Motor neuron (in vitro differentiated cells): ENCODE measurements at regions of chr16 and their contacts with region 1.

Region 1: GRCh38 chr16:62190426-62190825 is 154.2 kb upstream of the CDH8 start:
- ATAC-seq: peak in 2 of 8 experiments; percentile 24 to 65
- H3K4me3 ChIP-seq: no peak overlapping the region
- H3K27ac ChIP-seq: no peak overlapping the region
- H3K4me1 ChIP-seq: no peaks in the 10 kb centered on the region

Region 2: DNA sequence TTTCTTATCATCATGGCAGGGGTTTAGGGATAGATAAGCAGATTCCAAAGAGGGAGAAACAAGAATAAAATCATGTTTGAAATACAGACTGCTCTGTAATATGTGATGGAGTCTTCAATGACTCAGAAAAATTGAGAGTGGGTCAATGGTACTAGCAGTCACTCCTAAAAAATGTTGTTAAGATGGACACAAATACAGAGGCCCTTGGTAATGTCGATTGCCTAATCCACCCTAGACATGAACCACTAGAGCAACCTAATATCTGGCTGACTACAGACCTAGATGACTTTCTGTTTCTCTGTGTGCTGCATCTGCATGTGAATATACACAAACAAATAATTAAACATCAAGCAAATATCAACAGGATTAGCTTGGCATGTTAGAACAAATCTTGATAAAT is 289.9 kb before region 1 on chr16:
- in situ Hi-C with region 1: no loop called
- ATAC-seq: no peak
- H3K4me3 ChIP-seq: no peak overlapping the region
- H3K27ac ChIP-seq: no peak overlapping the region
- H3K4me1 ChIP-seq: no peaks in the 10 kb centered on the region

Region 3: DNA sequence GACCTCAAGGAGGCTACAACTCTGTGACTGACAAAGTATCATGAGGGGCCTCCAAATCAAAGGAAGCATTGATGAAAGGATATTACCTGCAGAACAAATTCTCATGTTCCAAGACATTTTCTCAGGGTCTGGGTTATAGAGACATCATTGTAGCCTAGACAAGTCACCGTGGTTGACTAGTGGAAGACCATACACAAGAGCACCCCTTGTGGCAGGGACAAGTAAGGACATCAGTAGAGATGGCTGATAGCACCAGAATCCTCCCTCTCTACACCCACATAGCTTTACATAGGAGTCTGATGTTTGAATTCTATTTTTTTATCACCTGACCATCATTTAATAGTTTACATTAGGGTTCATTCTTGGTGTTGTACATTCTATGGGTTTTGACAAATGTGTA is 121.7 kb before region 1 on chr16:
- in situ Hi-C with region 1: no loop called
- ATAC-seq: no peak
- H3K4me3 ChIP-seq: no peak overlapping the region
- H3K27ac ChIP-seq: no peak overlapping the region
- H3K4me1 ChIP-seq: no peaks in the 10 kb centered on the region

Region 4: DNA sequence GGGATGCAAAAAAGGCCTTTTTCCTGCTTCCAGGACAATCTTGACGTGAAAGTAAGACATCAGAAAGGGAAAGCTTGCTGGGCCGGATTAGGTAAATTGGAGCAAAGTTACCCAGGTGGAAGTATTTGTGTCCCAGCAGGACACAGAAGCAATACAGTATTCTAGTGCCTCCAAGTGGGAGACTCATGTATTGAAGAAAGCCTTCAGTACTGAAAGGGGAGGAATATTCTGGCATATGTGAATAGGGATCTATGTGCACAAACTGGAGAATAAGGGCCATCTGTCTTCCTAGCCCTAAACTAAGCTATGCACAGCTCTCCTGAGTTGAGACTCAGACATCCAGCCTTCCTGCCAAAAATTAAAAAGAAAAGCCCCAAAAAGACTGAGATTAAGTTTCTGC is 173.1 kb after region 1 on chr16:
- in situ Hi-C with region 1: loop called in 1 of 9 experiments (anchors 25 kb)
- ATAC-seq: peak in 3 of 8 experiments; percentile 49 to 93 (median 76)
- H3K4me3 ChIP-seq: no peak overlapping the region
- H3K27ac ChIP-seq: no peak overlapping the region
- H3K4me1 ChIP-seq: no peaks in the 10 kb centered on the region

Region 5: DNA sequence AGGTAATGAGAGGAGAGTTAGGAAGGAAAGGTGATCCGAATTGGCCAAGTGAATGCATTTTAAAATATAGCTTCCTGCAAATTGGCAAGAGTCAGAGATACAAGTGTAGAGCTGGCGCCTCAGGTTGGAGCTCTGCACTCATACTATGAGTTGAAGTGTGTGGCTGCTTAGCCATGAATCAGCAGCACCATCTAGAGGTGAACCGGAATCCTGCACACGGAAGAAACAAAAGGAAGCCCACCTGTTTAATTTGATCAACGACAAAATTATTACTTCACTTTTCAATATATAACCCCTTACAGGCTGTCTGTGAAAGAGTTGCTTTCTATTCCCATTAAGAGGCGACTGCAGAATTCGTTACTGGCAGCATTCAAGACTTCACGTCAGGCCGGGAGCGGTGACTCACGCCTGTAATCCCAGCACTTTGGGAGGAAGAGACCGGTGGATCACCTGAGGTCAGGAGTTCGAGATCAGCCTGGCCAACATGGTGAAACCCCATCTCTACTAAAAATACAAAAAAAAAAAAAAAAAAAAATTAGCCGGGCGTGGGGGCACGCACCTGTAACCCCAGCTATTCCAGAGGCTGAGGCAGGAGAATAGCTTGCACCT is 1099.5 kb after region 1 on chr16:
- in situ Hi-C with region 1: loop called in 2 of 9 experiments (anchors 25 kb)
- ATAC-seq: peak; percentile 38 to 84 (median 62)
- H3K4me3 ChIP-seq: no peak overlapping the region
- H3K27ac ChIP-seq: no peak overlapping the region
- H3K4me1 ChIP-seq: peaks cover 14 to 18% of the 10 kb centered on the region in 2 donors